ENCODE measurements at regions of chr1 and their contacts with region 1.

Region 1: DNA sequence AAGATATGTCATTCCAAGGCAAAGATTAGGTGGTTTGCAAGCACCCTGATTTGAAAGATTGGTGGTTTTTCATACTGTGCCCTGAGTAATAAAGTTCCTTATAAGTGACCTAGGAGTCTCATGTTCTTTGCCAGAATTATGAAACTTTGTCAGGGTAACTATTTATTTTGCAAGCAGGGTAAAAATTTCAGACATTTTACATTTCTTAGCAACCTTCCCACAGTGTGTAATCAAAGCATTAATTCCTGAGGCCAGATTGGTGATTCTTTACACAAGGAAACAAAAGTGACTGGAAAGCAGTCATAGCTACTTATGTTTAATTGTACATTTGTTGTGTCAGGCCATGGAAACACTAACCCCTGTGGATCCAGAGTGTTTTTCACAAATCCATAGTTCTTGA is 998.0 kb upstream of the B3GALT2 start:
- DNase-seq: no peak
- CTCF ChIP-seq: no peak

Region 2: DNA sequence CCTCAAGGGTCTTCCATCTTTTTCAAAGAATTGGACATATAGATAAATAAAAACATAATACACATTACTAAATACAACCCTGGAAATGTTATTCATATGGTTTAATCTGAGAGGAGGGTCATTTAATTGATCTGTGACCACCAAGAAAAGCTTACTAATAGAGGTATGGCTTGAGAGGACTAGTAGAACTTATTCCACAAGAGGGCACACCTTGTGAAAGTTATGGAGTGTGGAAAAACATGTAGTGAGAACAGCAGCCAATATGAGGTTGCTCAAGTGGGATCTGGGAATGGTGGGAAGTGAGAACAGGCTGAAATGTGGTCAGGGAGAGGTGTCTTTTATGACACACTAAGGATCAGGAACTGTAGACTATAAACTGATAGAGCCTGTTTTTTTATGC is 24.5 kb before region 1 on chr1:
- CTCF ChIA-PET with region 1: no interaction called
- POLR2A ChIA-PET with region 1: no interaction called
- DNase-seq: no peak
- CTCF ChIP-seq: no peak

Region 3: DNA sequence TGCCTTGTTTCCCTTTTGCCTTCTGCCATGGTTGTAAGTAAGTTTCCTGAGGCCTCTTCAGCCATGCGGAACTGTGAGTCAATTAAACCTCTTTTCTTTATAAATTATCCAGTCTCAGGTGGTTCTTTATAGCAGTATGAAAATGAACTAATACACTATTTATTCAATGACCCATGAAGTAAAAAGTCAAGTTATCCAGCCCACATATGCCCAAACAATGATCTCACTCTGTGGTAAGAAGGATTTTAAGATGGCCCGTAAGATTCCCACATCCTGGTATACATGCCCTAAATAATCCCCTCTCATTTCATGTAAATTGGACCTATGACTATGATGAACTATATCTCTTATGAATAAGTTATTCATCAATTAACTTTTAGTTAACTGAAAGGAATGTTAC is 10.3 kb after region 1 on chr1:
- CTCF ChIA-PET with region 1: interaction called, 16 read pairs
- POLR2A ChIA-PET with region 1: no interaction called
- DNase-seq: no peak
- CTCF ChIP-seq: no peak